ENCODE measurements at regions of chr15 and their contacts with region 1.

Region 1: DNA sequence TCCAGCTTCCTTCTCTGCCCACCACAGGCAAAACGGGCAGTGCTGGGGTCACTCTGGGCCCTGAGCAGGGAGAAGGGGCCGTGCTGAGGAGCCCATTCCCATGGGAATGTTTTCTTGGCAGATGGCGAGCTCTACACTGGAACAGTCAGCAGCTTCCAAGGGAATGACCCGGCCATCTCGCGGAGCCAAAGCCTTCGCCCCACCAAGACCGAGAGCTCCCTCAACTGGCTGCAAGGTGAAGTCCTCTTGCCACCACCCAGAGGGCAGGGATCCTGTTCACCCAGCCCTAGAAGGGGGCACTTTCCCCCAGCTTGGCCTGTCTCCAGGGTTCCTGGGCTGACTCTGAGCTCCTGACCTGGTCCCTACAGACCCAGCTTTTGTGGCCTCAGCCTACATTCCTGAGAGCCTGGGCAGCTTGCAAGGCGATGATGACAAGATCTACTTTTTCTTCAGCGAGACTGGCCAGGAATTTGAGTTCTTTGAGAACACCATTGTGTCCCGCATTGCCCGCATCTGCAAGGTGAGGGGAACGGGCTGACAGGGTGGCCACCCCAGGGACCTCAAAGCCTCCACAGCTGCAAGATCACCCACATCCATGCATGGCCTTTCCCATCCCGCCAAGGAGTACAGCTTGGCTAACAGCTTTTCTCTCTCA is 12.4 kb downstream of the CIB1 start:
- DNase-seq: peak; percentile 82

Region 2: GRCh38 chr15:89893696-89894455 is 327.5 kb before region 1 on chr15 and contains the start of gene AP3S2:
- intact Hi-C with region 1: loop called (anchors 10 kb)
- DNase-seq: peak; percentile 95
- total RNA-seq, gene AP3S2: 33.6 TPM

Region 3: DNA sequence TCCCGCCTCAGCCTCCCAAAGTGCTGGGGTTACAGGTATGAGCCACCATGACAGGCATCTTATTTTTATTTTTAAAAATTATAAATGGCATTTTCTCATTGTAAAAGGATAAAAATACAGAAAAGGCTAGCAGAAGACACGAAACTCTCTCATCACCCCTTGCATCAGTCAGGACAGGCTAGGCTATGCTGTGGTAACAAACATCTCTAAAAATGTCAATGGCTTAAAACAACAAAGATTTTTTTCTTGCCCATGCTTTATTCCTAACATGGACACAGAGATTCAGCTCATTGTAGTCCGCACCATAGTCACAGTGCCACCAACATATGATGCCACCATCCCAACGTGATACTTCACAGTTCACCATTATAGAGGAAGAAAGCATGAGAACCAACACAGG is 54.3 kb before region 1 on chr15:
- intact Hi-C with region 1: loop called (anchors 1 kb)
- DNase-seq: no peak

Region 4: DNA sequence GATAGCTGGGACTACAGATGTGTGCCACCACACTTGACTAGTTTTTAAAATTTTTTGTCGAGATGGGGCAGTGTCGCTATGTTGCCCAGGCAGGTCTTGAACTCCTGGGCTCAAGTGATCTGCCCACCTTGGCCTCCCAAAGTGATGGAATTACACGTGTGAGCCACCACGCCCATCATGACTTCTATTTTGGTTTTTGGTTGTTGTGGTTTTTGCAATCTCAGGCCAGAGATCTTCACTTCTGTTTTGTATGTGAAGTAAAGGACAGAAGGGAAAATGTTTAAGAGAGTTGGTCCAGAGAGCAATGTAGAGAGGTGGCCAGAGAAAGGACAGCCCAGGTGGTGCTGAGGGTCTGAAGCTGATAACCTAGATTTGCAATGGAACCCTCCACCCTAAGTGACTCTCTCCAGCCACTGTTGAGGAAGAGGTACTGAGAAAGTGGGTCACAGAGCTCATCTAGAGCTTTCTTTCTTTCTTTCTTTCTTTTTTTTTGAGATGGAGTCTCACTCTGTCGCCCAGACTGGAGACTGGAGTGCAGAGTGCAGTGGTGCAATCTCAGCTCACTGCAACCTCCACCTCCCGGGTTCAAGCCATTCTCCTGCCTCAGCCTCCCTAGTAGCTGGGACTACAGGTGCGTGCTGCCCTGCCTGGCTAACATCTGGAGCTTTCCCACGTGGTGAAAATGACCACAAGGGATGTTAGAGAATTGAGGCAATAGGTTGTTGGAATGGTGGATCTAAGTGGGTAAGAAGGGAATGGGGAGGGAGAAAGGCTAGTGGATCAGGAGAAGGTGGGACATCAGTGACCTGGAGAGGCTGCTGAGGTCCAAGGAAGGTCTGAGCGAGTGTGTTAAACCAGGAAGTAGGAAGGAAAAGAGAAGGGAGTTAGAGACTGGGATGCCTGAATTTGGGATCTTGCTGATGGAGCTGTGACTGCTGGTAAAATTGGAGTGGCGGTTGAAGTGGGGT is 42.6 kb before region 1 on chr15:
- intact Hi-C with region 1: no loop called
- DNase-seq: no peak

Region 5: GRCh38 chr15:90191794-90192509 is 29.4 kb before region 1 on chr15:
- intact Hi-C with region 1: loop called (anchors 5 kb)
- DNase-seq: peak; percentile 79

Region 6: GRCh38 chr15:90382305-90382704 is 160.9 kb after region 1 on chr15:
- intact Hi-C with region 1: no loop called
- DNase-seq: no peak

Region 7: DNA sequence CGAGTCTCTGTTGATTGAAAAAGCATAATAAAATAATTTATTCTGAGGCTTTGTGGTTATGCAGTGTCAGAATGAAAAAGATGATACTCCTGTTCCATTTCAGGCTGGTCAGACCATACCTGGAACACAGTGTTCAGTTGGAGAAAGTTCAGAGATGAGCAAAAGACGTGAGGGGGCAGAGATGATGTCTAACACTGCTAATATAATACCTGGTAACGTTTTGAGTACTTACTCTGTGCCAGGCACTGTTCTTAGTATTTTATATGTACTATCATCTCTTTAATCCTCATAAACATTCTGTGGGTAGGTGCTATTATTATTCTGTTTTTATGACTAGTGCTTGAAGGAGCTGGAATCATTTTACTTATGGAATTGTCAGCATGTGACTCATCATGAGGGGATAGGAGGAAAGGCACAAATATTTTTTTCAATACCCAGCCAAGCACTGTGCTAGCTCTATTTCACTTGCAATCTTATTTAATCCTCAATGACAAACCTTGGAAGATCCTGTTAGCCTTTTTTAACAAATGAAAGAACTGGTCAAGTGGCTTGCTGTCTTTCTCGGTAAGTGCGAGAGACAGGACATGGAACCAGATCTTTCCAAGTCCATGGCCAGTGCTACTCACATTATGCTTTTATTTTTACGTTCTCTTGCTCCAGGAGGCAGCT is 198.5 kb after region 1 on chr15:
- intact Hi-C with region 1: no loop called
- DNase-seq: no peak